ENCODE measurements at regions of chr10 and their contacts with region 1.

Region 1: GRCh38 chr10:102225646-102226541 is at the start of gene ELOVL3:
- DNase-seq: peak; percentile 75
- H3K4me3 ChIP-seq: peak within 1 kb of the TSS; percentile 47
- H3K27ac ChIP-seq: no peak within 1 kb of the TSS
- H3K4me1 ChIP-seq: peaks cover 3% of the 10 kb centered on the region
- CTCF ChIP-seq: no peak
- total RNA-seq, gene ELOVL3: 0.62 TPM in 1 of 2 replicates, not detected in the other

Region 2: GRCh38 chr10:102352066-102352715 is 126.3 kb after region 1 on chr10:
- CTCF ChIA-PET with region 1: interaction called, 9 read pairs
- POLR2A ChIA-PET with region 1: no interaction called
- intact Hi-C with region 1: loop called (anchors 1 kb)
- DNase-seq: peak; percentile 63
- H3K4me3 ChIP-seq: no peak overlapping the region
- H3K27ac ChIP-seq: no peak overlapping the region
- H3K4me1 ChIP-seq: no peaks in the 10 kb centered on the region
- CTCF ChIP-seq: peak; percentile 99

Region 3: DNA sequence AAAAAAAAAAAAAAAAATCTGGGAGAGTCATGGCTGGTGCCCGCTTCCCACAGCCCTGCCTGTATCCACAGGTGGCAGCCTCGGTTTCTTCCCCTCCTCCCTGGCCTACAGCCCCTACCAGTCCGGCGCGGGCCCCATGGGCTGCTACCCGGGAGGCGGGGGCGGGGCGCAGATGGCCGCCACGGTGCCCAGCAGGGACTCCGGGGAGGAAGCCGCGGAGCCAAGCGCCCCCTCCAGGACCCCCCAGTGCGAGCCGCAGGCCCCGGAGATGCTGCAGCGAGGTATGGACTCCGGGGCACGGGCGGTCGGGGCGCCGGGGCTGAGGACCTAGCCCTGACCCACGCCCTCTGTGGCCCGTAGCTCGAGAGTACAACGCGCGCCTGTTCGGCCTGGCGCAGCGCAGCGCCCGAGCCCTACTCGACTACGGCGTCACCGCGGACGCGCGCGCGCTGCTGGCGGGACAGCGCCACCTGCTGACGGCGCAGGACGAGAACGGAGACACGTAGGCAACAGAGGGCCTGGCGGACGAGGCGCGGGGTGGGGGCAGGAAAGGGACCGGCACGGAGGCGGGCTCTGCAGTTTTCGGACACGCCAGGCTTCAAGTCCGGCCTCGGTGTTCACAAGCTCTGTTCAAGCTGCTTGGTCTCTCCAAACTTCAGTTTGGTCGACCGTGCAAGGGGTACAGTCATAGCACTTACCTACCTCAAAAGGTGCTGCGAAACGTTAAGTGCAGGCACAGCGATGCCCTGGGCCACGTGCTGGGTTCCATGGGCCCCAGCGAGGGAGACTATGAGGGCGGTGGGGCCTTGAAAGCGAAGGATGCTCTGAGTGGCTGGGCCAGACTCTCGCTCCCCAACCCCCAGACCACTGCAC is 173.6 kb after region 1 on chr10:
- CTCF ChIA-PET with region 1: no interaction called
- POLR2A ChIA-PET with region 1: no interaction called
- intact Hi-C with region 1: loop called (anchors 1 kb)
- DNase-seq: peak; percentile 90
- H3K4me3 ChIP-seq: peak overlapping the region; percentile 59
- H3K27ac ChIP-seq: peak overlapping the region; percentile 25
- H3K4me1 ChIP-seq: peaks cover 21% of the 10 kb centered on the region
- CTCF ChIP-seq: peak; percentile 90

Region 4: GRCh38 chr10:102404391-102405107 is 178.7 kb after region 1 on chr10:
- CTCF ChIA-PET with region 1: no interaction called
- POLR2A ChIA-PET with region 1: no interaction called
- intact Hi-C with region 1: loop called (anchors 1 kb)
- DNase-seq: no peak
- H3K4me3 ChIP-seq: no peak overlapping the region
- H3K27ac ChIP-seq: no peak overlapping the region
- H3K4me1 ChIP-seq: peaks cover 5% of the 10 kb centered on the region
- CTCF ChIP-seq: no peak

Region 5: DNA sequence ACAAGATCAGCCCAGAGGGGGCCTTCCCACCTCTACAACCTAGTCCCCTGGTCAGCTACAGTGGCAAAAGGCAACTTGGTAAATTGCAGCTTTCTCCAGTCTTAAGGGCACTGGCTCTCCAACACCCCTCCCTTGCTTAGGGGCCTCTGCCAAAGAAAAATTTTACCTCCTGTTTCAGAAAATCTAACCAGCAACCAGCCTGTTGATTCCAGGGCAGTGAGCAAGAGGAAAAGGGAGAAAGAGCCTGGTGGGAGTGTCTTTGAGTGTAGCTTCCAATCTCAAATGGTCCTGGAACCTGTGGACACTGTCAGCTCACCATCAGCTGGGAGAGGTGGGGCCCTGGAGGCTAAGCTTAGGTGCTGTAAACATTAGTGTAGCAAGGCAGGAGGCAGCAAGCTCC is 253.8 kb after region 1 on chr10:
- CTCF ChIA-PET with region 1: no interaction called
- POLR2A ChIA-PET with region 1: no interaction called
- intact Hi-C with region 1: loop called (anchors 1 kb)
- DNase-seq: no peak
- H3K4me3 ChIP-seq: no peak overlapping the region
- H3K27ac ChIP-seq: no peak overlapping the region
- H3K4me1 ChIP-seq: peaks cover 3% of the 10 kb centered on the region
- CTCF ChIP-seq: no peak

Region 6: DNA sequence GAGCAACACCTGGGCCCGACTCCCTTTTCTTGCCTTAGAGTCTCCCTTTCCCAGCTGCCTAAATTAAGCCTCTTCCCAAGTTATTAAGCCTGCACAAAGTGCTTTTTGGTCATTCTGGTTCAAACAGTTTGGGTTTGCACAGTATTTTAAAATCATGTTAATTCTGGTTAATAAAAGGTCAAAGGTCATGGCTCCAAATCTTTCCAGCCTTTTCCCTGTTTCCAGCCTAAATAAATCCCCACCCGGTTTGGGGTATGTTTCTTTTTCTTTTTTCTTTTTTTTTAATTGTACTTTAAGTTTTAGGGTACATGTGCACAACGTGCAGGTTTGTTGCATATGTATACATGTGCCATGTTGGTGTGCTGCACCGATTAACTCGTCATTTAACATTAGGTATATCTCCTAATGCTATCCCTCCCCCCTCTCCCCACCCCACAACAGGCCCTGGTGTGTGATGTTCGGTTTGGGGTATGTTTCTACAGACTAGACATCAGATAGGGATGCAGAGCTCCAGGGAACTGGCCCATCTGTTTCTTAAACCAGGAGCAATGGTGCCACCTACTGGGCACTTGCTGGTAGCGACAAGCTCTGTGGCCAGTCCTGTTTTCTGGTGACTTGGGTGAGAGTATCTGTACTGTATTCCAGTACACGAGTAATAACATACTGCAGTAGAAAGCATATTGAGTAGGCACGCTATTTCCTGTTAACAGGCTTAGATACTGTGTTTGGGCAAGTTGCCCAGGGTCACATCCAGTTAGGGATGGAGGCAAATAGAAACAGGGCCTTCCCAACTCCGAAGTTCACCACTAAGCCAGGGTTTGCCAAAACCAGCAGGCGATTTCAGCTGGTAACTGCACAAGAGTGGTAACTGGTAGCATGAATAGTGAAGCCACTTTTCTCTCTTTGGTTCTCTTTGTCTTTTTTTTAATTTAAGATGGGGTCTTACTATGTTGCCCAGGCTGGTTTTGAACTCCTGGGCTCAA is 357.8 kb after region 1 on chr10:
- CTCF ChIA-PET with region 1: no interaction called
- POLR2A ChIA-PET with region 1: no interaction called
- intact Hi-C with region 1: loop called (anchors 5 kb)
- DNase-seq: peak; percentile 90
- H3K4me3 ChIP-seq: no peak overlapping the region
- H3K27ac ChIP-seq: no peak overlapping the region
- H3K4me1 ChIP-seq: no peaks in the 10 kb centered on the region
- CTCF ChIP-seq: peak; percentile 87

Measured in OCI-LY7 (cell line).